ENCODE measurements at regions of chr1 and their contacts with region 1.

Region 1: DNA sequence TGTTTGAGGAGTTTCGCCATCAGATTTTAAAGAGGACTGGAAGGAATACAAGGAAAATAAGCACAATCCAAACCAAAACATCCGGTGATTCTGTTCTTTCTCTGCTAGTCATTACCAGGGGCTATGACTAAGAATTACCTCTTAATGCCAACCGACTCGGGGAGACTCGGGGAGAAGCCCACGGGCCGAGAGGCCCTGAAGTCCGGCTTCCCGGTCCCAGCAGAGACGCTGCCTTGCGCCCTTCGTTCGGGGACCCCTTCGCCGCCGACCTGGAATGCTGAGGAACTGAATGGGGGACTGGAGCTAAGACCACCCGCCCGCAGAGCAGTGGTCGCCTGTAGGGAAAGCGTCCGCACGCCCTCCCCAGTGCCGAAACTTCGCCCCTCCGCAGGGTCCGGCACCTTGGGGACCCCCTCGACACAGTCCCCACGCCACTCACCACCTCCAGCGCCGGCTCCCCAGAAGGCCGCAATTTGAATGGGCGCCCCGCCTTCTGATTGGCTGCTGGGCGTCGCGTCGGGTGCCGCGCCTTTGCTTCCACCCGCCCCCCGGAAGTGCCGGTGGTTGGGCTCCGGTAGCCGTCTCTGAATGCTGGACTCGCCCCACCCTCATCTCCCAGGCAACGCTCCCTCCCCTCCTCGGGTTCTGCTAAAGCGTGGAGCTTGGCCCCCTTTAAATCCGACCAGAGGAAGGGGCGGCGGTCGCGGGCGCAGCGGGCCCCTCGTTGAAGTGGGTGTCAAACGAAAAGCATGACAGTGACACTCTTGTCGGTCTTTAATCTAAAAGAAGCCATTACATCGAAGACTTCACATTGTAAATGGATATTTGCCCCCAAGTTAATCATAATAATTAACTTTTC is at the start of gene KIF14:
- DNase-seq: peak; percentile 93 to 96
- ATAC-seq: peak; percentile 99 to 100 (median 100)
- H3K4me3 ChIP-seq: peak within 1 kb of the TSS; percentile 79
- H3K27ac ChIP-seq: no peak within 1 kb of the TSS
- H3K4me1 ChIP-seq: peaks cover 11% of the 10 kb centered on the region
- H3K27me3 ChIP-seq: no peaks in the 10 kb centered on the region
- CTCF ChIP-seq: no peak
- total RNA-seq, gene KIF14: 0.04 to 0.11 (median 0.08) TPM

Region 2: GRCh38 chr1:200428482-200429205 is 191.9 kb before region 1 on chr1:
- intact Hi-C with region 1: no loop called
- DNase-seq: no peak
- ATAC-seq: no peak
- H3K4me3 ChIP-seq: no peak overlapping the region
- H3K27ac ChIP-seq: no peak overlapping the region
- H3K4me1 ChIP-seq: no peaks in the 10 kb centered on the region
- H3K27me3 ChIP-seq: no peaks in the 10 kb centered on the region
- CTCF ChIP-seq: no peak

Region 3: GRCh38 chr1:200669314-200670241 is 49.1 kb after region 1 on chr1 and contains the start of gene DDX59:
- intact Hi-C with region 1: loop called (anchors 2 kb)
- DNase-seq: peak; percentile 96 to 98
- ATAC-seq: peak; percentile 90 to 95 (median 90)
- H3K4me3 ChIP-seq: peak within 1 kb of the TSS; percentile 97
- H3K27ac ChIP-seq: peak within 1 kb of the TSS; percentile 100
- H3K4me1 ChIP-seq: peaks cover 20% of the 10 kb centered on the region
- H3K27me3 ChIP-seq: no peaks in the 10 kb centered on the region
- CTCF ChIP-seq: no peak
- total RNA-seq, gene DDX59: 18.1 to 33.7 (median 29.9) TPM

Region 4: GRCh38 chr1:200738740-200739498 is 118.4 kb after region 1 on chr1 and contains the start of gene CAMSAP2:
- intact Hi-C with region 1: loop called in 1 of 2 experiments (anchors 5 kb)
- DNase-seq: peak; percentile 89 to 94
- ATAC-seq: peak; percentile 89 to 91 (median 90)
- H3K4me3 ChIP-seq: peak within 1 kb of the TSS; percentile 97
- H3K27ac ChIP-seq: peak within 1 kb of the TSS; percentile 99
- H3K4me1 ChIP-seq: peaks cover 38% of the 10 kb centered on the region
- H3K27me3 ChIP-seq: no peaks in the 10 kb centered on the region
- CTCF ChIP-seq: no peak
- total RNA-seq, gene CAMSAP2: 37.0 to 70.8 (median 49.8) TPM

Region 5: DNA sequence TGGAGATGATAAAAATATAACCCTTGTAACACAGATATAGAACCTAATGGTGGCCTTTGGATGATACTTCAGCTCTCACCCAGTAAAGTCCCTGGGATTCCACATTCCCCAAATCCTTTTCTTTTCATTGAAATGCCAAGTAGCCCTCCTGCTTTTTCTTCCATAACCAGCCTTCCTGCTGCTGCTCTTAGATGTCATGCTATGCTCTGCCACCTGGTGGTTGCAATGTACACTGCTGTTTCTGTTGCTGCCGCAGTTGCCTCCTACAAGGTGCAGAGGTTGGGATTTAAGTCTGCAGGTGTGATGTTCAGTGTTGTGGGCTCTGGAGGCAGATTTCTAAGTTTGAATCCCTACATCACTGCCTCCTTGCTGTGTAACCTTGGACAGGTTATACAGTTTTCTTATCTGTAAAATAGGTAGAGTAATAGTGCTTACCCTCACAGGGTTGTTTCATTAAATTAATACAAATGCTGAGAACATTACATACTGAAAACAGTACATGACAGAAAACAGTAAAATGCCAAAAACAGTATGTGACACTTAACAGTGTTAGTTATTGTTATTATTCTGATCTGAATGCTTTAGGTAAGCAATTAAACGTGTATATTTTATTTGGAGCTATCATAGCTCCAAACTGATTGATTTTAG is 182.5 kb after region 1 on chr1:
- intact Hi-C with region 1: loop called (anchors 1 to 2 kb)
- DNase-seq: peak; percentile 58 to 70
- ATAC-seq: peak; percentile 74 to 97 (median 88)
- H3K4me3 ChIP-seq: no peak overlapping the region
- H3K27ac ChIP-seq: no peak overlapping the region
- H3K4me1 ChIP-seq: peaks cover 3% of the 10 kb centered on the region
- H3K27me3 ChIP-seq: no peaks in the 10 kb centered on the region
- CTCF ChIP-seq: peak; percentile 95

Region 6: DNA sequence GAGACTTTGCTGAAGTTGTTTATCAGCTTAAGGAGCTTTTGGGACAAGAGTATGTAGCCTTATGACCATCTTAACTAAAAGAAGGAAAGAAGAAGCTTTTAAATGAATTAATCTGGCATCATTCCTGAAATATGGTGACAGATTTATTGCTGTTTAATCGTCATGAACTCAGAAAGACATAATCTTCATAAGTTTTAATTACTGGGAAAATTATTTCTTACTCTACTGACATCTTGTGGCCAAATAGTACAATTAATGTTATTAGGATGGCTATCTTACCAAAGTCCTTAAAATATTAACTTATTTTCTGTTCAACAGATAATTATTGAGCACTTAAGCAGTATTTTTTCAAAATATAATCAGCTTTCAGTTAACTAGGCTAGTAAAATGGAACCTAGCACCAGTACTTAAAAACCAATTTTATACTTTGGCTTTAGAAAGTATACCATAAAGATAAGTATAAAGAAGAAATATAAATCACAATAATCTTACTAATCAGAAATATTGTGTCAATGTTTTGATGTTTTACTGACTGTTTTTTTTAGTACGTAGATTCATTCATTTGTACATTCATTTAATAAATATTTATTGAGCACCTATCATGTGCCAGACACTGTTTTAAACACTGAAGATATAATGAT is 217.5 kb after region 1 on chr1:
- intact Hi-C with region 1: loop called in 1 of 2 experiments (anchors 2 kb)
- DNase-seq: no peak
- ATAC-seq: no peak
- H3K4me3 ChIP-seq: no peak overlapping the region
- H3K27ac ChIP-seq: no peak overlapping the region
- H3K4me1 ChIP-seq: no peaks in the 10 kb centered on the region
- H3K27me3 ChIP-seq: no peaks in the 10 kb centered on the region
- CTCF ChIP-seq: peak; percentile 51

Region 7: DNA sequence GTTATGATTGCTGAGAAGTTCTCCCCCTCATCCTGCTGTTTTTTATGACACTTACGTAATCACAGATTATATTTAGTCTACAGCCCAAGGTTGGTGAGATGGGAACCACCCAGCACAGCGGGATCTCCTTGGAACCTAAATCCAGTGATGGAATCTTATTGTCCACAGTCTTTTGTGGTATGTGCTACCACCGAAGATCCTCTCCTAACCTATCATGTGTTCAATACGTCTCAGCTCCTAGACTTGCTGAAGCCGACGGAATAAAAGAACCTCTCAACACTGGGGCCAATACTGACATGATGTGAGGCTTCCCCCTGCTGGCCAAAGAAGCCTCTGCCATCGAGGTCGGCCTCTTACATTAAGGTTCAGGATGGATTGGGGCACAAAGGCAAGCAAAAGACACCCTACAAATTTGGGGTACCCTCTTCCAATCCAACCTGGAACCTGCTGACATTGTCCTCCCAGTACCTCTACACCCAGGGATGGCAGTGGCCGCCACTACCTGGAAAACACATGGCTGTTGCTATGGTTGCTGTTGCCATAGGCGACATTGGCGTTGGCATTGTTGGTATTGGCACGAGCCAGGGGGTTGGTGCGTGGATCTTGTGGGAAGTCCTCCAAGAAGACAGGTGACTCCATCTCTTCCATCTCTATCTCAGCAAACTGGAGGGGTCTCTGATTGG is 422.4 kb after region 1 on chr1:
- intact Hi-C with region 1: loop called (anchors 5 to 10 kb)
- DNase-seq: peak; percentile 53 to 74
- ATAC-seq: peak; percentile 61 to 86 (median 70)
- H3K4me3 ChIP-seq: no peak overlapping the region
- H3K27ac ChIP-seq: no peak overlapping the region
- H3K4me1 ChIP-seq: peaks cover 6% of the 10 kb centered on the region
- H3K27me3 ChIP-seq: no peaks in the 10 kb centered on the region
- CTCF ChIP-seq: peak; percentile 83

Measured in psoas muscle (tissue), 8 donors.